ENCODE measurements at regions of chr7 and their contacts with region 1.

Region 1: DNA sequence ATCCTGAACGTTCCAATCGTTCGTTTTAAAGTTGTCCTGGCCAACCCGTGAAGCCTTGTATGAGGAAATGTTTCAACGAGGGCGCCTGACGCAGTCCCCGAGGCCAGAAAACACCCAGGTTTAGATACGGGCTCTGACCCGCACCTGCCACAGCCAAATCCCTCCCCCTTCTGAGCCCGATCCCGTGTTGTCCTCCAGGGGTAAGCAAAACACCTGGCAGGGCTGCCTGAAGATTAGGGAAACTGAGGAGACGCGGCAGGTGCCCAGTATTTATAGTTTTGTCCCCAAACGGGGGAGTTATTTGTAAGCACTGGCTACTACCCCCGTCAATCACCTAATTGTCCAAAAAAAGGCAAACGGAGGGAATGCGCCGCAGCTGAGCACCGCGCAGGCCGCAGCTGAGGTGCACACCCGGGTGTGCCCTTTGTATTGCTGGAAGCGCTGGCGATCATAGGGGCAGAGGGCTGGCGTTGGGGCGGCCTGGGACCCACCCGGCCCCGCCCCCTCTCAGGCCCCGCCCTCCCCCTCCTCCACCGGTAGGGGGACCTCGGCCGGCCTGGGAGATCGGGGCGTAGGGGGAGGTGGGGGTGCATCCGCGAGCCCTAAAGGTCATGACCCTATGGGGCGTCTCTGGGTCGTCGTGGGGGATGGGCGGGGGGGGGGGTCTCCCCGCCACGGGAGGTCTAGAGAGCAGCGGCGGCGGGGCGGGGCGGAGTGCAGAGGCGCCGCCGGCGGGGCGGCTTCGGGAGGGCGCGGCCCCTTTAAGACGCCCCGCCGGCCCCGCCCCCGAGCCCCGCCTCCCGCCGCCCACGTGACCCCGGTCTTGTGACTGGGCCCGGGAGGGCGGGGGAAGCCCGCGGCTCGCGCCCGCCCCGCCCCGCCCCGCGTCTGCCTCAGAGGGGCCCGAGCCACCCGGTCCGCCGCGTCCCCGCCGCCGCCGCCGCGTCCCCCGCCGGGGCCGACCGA is at the start of gene BRI3:
- DNase-seq: peak; percentile 75
- H3K4me3 Mint-ChIP-seq: peak within 1 kb of the TSS; percentile 88
- H3K27ac Mint-ChIP-seq: peak within 1 kb of the TSS; percentile 83
- H3K4me1 Mint-ChIP-seq: peaks cover 16% of the 10 kb centered on the region
- H3K27me3 Mint-ChIP-seq: no peaks in the 10 kb centered on the region
- total RNA-seq, gene BRI3: 67.1 and 68.3 TPM in 2 replicates

Region 2: GRCh38 chr7:97801108-97801507 is 480.0 kb before region 1 on chr7:
- intact Hi-C with region 1: no loop called
- DNase-seq: no peak
- H3K4me3 Mint-ChIP-seq: no peak overlapping the region
- H3K27ac Mint-ChIP-seq: no peak overlapping the region
- H3K4me1 Mint-ChIP-seq: no peaks in the 10 kb centered on the region
- H3K27me3 Mint-ChIP-seq: peaks cover 1% of the 10 kb centered on the region

Region 3: DNA sequence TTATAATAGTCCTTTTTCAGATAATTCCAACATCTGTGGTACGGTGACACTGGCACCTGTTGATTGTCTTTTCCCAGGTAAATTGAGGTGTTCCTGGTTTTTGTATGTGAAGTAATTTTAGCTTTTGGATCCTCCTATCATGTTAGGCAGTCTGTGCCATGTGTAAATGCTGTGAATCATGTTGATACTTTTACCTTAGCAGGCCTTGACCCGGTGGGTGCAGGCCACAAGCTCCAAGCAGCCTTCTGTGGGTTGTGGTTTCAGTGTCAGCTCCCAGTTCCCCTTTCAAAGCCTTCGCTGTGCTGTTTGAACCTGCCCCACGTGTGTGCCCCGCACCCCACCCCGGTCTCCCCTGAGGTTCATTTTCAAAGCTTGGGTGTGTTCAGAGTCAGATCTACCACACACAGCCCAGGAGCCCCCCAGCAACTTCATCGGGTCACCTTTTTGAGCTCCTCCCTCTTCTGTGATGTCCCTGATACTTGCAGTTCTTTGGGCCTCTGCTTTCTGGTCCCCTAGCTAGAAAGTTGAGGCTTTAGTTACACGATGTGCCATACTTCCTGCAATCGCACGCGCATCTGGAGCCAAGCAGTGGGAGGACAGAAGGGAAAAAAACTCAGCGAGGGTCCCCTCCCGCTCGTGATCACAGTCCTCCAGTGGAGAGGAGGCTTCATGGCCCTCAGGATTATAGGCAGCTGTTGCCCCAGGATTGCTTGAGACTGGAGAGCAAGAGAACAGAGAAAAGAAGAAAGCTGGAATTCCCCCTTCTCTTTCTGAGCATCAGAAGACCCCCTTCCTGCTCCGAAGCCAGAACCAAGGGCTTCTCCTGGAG is 78.5 kb before region 1 on chr7:
- intact Hi-C with region 1: loop called (anchors 2 kb)
- DNase-seq: peak; percentile 61
- H3K4me3 Mint-ChIP-seq: peak overlapping the region; percentile 56
- H3K27ac Mint-ChIP-seq: peak overlapping the region; percentile 32
- H3K4me1 Mint-ChIP-seq: peaks cover 38% of the 10 kb centered on the region
- H3K27me3 Mint-ChIP-seq: no peaks in the 10 kb centered on the region

Region 4: DNA sequence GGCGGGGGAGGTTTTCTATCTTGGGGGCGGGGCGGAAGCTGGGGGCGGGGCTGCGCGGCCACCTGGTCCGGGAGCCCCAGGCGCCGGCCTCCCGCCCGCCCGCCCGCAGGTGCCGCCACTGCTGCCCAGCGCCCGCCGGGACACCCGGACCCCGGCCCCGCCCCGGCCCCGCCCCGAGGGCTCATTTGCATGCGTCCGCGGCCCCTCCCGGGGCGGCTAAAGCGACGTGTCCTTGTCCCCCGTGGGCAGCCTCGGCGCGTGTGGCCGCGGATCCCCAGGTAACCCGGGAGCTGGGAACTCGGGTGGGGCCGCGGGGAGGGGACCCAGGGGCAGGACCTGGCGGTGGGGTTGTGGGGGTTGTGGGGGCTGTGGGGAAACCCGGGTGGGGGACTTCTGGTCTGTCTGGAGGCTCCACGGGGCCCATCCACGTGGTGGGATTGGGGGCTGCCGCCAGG is 69.8 kb before region 1 on chr7 and contains the start of gene BHLHA15:
- intact Hi-C with region 1: loop called (anchors 1 kb)
- DNase-seq: no peak
- H3K4me3 Mint-ChIP-seq: peak within 1 kb of the TSS; percentile 53
- H3K27ac Mint-ChIP-seq: no peak within 1 kb of the TSS
- H3K4me1 Mint-ChIP-seq: no peaks in the 10 kb centered on the region
- H3K27me3 Mint-ChIP-seq: no peaks in the 10 kb centered on the region
- total RNA-seq, gene BHLHA15: 0.57 and 0.73 TPM in 2 replicates

Region 5: DNA sequence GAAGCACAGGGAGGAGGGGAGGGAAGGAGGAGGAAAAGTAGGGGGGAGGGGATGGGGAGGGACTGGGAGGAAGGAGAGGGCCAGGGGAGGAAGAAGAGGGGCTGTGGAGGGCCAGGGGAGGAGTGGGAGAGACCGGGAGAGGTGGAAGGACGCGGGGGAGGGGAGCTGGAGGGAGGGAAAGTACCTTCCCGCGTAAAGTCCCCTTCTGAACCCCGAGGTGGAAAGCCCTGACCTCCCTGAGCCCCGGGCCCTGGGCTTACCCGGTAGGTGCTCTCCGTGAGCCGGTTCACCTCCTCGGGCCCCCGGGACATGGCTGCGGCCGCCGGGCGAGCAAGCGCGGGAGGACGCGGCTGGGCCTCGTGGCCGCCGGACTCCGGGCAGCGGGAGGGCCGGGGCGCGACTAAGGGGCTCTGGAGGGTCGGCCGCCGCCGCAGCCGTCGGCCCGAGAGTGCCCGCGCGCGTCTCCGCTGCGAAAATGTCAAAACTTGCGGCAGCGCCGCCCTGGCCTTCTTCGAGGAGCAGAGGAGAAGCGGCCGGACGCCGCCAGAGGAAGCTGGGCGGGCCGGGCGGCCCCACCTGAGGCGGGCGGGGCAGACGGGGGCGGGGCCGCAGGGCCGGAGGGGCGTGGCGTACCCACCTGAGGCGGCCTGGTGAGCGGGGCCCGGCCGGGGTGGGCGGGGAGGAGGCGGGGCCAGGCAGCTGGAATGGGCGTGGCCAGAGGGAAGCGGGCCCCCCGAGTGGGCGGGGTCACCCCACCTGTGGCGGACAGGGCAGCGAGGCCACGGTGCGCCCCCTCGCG is 119.7 kb after region 1 on chr7 and contains the start of gene BAIAP2L1:
- intact Hi-C with region 1: loop called (anchors 1 kb)
- DNase-seq: peak; percentile 56
- H3K4me3 Mint-ChIP-seq: peak within 1 kb of the TSS; percentile 33
- H3K27ac Mint-ChIP-seq: peak within 1 kb of the TSS; percentile 31
- H3K4me1 Mint-ChIP-seq: peaks cover 9% of the 10 kb centered on the region
- H3K27me3 Mint-ChIP-seq: peaks cover 29% of the 10 kb centered on the region
- total RNA-seq, gene BAIAP2L1: 1.7 and 2.7 TPM in 2 replicates

Region 6: GRCh38 chr7:98420966-98421612 is 140.0 kb after region 1 on chr7:
- intact Hi-C with region 1: no loop called
- DNase-seq: peak; percentile 25
- H3K4me3 Mint-ChIP-seq: no peak overlapping the region
- H3K27ac Mint-ChIP-seq: no peak overlapping the region
- H3K4me1 Mint-ChIP-seq: no peaks in the 10 kb centered on the region
- H3K27me3 Mint-ChIP-seq: peaks cover 10% of the 10 kb centered on the region

Region 7: GRCh38 chr7:98870121-98870651 is 589.1 kb after region 1 on chr7:
- intact Hi-C with region 1: loop called (anchors 2 kb)
- DNase-seq: peak; percentile 48
- H3K4me3 Mint-ChIP-seq: peak overlapping the region; percentile 80
- H3K27ac Mint-ChIP-seq: no peak overlapping the region
- H3K4me1 Mint-ChIP-seq: no peaks in the 10 kb centered on the region
- H3K27me3 Mint-ChIP-seq: peaks cover 37% of the 10 kb centered on the region

Region 8: DNA sequence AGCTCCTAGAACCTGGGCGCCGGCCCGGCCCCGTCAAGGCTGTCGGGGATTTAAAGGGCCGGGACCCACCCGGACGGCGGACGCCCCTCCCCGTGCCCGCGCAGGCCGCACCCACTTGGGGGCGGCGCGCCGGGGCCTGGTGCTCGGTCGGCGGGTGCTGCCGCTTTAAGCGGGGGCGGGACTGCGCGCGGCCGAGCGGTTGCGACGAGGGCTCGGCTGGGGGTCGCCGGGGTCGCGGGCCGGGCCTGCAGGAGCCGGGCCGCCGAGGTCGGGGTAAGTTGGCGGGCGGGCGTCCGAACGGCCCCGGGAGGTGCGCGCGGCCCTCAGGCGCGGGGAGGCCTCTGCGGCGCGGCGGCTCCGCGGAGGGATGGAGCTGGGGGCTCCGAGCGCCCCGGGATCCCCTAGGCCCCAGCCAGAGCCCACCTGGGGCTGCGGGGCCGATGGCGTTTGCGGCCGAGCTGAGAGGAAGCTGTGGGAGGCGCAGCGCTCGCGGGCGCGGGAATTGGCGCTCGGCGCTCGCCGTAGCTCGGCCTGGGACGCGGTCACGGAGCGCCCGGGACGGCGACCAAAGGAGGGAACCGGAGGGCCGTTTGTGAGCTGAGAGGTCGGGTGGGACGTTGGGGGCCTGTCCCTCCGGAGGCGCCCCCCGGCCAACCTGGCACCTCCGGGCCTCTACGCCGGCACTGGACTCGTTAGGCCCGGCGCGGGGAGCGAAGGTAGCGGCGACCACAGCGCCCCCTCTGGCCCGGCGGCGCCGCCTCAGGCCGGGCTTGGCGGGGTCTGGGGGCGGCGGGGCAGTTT is 597.5 kb after region 1 on chr7 and contains the start of gene TRRAP:
- intact Hi-C with region 1: loop called (anchors 2 kb)
- DNase-seq: peak; percentile 70
- H3K4me3 Mint-ChIP-seq: peak within 1 kb of the TSS; percentile 95
- H3K27ac Mint-ChIP-seq: peak within 1 kb of the TSS; percentile 92
- H3K4me1 Mint-ChIP-seq: peaks cover 13% of the 10 kb centered on the region
- H3K27me3 Mint-ChIP-seq: peaks cover 10% of the 10 kb centered on the region
- total RNA-seq, gene TRRAP: 66.9 and 69.6 TPM in 2 replicates

Measured in activated T-helper 1 cell treated with anti-CD3 and anti-CD28 coated beads, Interleukin-12 subunit alpha, Interleukin-12 subunit beta, Interleukin-2, Interleukin-4 antibody, amounts not matched to agents 30 ng/mL and 10 ng/mL and 1 ng/mL, durations not matched to agents 14 hours and 24 hours and 36 hours (primary cell).